AG04449 (cell line): ENCODE measurements at regions of chr16 and their contacts with region 1.

Region 1: GRCh38 chr16:3059000-3059722 is 6.3 kb upstream of the IL32 start:
- DNase-seq: peak; percentile 16
- H3K4me3 ChIP-seq: peak overlapping the region; percentile 81
- CTCF ChIP-seq: peak; percentile 91

Region 2: DNA sequence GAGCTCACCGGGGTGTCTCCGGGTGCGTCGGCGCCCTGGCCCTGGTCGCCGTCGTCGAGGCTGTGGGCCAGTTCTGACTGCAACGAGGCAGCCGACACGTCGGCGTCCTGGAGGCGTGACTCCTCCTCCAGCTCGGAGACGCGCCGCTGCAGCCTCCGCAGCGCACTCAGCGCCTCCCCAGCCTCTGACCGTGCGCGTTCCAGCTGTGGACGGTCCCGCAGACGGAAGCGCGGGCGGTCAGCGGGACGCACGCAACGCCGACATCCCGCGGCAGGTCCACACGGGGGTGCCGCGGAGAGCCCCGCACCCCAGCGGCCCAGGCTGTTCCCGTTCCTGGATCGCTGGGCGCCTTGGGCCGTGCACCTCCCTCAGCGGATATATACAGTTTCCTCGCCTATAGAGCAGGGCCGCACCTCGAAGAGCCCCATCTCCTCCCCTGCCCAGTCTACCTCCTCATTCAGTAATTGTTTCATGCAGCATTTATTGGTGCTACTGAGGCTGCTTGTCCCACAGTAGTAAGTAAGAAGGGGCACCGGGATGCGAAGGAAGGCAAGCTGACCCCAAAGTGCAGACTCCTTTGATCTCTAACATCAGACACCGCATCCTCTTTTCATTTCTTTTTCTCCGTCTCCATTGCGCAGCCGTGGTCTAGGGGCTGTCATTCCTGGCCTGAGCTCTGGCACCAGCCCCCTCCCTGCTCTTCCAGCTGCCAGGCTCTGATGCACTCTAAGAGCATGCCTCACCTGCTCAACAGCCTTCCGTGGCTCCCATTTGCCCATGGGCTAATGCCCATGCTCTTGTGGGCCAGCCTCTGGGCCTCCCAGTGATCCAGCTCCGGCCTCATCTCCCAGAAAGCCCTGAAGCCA is 29.4 kb before region 1 on chr16:
- CTCF ChIA-PET with region 1: interaction called, 39 read pairs
- POLR2A ChIA-PET with region 1: no interaction called
- DNase-seq: no peak
- H3K4me3 ChIP-seq: peak overlapping the region; percentile 25
- CTCF ChIP-seq: no peak

Region 3: GRCh38 chr16:3076577-3076976 is 17.4 kb after region 1 on chr16:
- CTCF ChIA-PET with region 1: interaction called, 24 read pairs
- POLR2A ChIA-PET with region 1: no interaction called
- DNase-seq: no peak
- H3K4me3 ChIP-seq: no peak overlapping the region
- CTCF ChIP-seq: no peak

Region 4: DNA sequence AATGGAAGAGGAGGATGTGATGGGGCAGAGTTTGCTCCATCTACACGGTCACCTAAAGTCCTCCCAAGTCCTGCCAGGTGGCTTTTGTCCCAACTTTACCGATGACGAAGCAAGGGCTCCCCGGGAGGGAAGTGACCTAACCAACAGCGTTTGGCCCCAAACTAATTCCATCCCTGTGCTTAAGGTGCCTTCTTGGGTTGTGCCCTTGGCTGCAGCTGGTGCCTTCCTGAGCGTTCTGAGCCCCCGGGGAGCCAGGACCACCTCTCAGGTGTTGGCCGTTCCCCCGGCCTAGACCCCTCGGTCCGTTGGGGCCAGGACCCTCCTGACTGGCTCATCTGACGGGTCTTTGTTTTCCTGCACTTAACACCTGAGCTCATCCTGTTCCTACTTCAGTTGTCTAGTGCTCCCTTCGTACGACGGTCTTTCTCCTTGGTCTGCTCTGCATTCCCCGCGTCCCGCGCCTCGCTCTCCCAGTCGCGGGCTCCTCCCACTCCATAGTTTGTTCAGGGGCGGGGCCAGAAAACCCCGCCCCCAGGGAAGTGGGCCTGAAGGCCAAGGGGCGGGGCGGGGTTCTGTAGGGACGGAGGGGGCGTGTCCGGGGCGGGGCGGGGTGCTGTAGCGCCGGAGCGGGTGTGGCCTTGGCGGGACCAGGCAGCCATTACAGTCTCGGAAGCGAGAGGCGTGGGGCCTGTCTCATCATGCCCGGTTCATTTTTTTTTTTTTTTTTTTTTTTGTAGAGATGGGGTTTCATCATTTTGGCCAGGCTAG is 40.8 kb after region 1 on chr16:
- CTCF ChIA-PET with region 1: interaction called, 27 read pairs
- POLR2A ChIA-PET with region 1: no interaction called
- DNase-seq: peak; percentile 9
- H3K4me3 ChIP-seq: peak overlapping the region; percentile 33
- CTCF ChIP-seq: no peak

Region 5: DNA sequence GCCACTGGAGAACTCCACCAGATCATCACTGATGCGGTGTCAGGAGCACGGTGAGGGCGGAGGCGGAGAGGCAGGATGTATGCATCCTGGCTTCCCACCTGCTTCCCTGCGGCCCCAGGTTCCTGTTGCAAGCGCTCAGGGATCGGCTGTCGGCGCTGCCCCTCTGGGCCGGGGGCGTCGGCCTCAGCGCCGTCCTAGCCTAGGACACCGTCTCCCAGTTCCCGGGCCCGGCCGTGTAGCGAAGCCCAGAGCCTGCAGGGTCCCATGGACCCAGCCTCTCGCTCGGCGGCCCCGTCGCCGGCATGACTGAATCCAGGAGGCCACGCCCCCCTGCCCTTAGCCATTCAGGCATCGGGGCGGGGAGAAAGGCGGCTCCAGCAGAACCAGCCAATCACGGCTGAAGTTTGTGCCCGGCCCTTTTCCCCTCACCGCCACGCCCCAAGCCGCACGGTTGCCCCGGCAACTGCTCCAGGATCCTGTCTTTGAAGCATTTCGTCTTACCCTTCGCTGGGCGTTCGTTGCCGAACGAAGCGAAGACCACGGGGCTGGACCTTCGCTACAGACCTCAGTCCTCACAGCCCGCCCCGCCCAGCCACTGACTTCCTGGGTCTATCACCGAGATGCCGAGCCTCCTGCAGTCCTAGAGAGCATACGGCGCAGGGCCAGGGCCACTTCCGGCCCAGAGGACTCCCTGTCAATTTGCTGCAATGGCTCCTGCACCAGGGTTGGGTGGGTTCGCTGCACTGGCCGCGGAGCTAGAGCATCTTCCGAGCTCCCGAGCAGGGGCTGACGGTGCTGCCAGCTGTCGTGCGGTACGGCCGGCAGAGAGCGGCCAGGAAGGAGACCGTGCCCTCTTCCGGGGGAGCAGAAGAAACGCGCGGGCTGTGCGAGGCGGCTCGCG is 65.1 kb after region 1 on chr16:
- CTCF ChIA-PET with region 1: interaction called, 88 read pairs
- POLR2A ChIA-PET with region 1: interaction called, 4 read pairs
- DNase-seq: peak; percentile 29
- H3K4me3 ChIP-seq: peak overlapping the region; percentile 85
- CTCF ChIP-seq: peak; percentile 20

Region 6: DNA sequence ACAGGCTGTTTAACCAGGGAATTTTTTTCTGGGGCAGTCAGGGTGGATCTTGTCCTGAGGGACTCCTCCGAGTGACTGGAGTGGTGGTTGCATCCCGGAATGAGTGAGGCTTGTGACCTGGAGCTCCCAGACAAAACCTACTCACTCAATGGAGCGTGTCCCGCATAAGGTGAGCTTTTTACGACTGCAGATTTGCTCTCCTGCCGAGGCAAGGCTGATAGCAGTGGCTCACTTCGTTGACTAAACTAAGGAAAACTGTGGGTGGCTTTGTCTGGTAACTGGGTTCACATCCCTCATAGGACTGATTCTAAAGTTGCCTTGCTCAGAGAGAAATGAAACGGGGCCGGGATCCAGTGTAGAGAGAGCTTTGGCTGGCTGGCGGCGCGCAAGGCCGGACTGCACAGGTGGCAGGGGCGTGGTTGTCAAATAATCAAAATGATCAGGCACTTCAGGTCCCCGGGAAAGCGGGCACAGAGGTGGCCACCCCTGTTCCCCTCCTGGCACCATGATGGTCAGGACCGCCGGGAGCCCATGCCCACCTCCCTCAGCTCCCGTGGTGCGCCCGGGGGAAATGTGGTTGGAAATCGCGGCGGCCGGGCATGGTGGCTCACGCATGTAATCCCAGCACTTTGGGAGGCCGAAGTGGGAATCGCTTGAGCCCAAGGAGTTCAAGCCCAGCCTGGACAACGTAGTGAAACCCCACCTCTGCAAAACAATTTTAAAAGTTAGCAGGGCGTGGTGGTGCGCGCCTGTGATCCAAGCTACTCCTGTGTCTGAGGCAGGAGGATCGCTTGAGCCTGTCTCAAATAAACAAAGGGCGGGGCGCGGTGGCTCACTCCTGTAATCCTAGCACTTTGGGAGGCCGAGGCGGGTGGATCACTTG is 102.2 kb after region 1 on chr16:
- CTCF ChIA-PET with region 1: interaction called, 17 read pairs
- POLR2A ChIA-PET with region 1: no interaction called
- DNase-seq: no peak
- H3K4me3 ChIP-seq: no peak overlapping the region
- CTCF ChIP-seq: no peak